Endothelial cell of umbilical vein (primary cell): ENCODE measurements at regions of chr13 and their contacts with region 1.

Region 1: DNA sequence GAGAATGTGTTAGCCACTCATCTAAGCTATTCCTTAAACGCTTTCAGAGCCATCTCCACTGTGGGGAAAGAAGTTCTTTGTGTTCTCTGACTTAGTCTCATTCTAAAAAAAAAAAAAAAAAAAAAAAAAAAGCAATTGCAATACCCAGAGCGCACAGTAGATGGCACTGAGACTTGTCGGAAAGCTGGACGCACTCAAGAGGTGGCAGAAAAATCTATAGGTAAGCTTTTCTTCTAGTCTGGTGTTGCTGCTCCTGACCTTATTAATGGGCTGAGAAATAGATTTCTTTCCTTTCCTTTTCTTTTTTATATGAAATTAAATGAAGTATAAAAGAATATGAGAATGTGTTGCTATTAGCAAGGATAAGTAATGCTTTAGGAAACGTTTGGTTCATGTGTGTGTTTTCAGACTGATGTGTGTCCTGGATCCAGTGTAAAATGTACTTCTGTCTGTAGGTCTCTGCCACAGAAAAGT is 4.7 kb upstream of the GJB2 start:
- DNase-seq: peak; percentile 54
- H3K4me3 ChIP-seq: no peak overlapping the region
- H3K27ac ChIP-seq: no peak overlapping the region
- H3K4me1 ChIP-seq: no peaks in the 10 kb centered on the region
- H3K27me3 ChIP-seq: peaks cover 45 to 68% of the 10 kb centered on the region in 2 experiments
- CTCF ChIP-seq: peak; percentile 64 to 75
- POLR2A ChIP-seq: no peak

Region 2: DNA sequence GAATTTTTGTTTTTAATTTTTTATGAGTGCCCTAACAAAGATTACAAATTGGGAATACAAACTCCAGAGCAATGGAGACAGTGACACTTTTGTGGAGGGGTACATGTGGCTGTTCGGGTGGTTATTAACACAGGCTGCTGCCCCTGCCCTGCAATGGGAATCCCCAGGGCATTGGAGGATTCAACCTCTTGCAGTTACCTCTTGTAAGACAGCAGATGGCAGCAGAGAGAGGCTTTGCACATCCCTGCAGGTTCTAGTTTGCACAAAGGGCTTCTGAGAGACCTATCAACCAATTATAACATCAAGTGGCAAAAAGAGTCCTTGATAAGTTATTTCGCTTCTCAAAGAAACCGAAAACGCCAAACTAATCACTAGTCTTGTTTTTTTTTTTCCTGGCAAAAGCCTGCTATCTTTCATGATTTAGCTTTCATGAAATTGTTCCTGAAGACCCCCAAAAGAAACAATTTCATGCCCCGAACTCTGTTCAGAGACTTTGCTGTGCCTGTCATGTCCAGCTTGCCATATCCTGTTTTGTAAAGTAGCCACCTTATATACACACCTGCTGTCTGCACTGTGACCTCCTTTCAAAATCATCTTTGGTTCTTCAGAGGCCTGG is 15.1 kb before region 1 on chr13:
- CTCF ChIA-PET with region 1: interaction called, 17 read pairs
- POLR2A ChIA-PET with region 1: no interaction called
- dilution Hi-C with region 1: no loop called
- intact Hi-C with region 1: no loop called
- DNase-seq: peak; percentile 68
- H3K4me3 ChIP-seq: no peak overlapping the region
- H3K27ac ChIP-seq: no peak overlapping the region
- H3K4me1 ChIP-seq: no peaks in the 10 kb centered on the region
- H3K27me3 ChIP-seq: peaks cover 28 to 45% of the 10 kb centered on the region in 2 experiments
- CTCF ChIP-seq: peak; percentile 74 to 78
- POLR2A ChIP-seq: no peak

Region 3: GRCh38 chr13:20209948-20210347 is 12.6 kb after region 1 on chr13:
- CTCF ChIA-PET with region 1: interaction called, 10 read pairs
- POLR2A ChIA-PET with region 1: no interaction called
- dilution Hi-C with region 1: no loop called
- intact Hi-C with region 1: no loop called
- DNase-seq: no peak
- H3K4me3 ChIP-seq: no peak overlapping the region
- H3K27ac ChIP-seq: no peak overlapping the region
- H3K4me1 ChIP-seq: no peaks in the 10 kb centered on the region
- H3K27me3 ChIP-seq: peaks cover 0 to 8% of the 10 kb centered on the region in 2 experiments
- CTCF ChIP-seq: no peak
- POLR2A ChIP-seq: no peak

Region 4: DNA sequence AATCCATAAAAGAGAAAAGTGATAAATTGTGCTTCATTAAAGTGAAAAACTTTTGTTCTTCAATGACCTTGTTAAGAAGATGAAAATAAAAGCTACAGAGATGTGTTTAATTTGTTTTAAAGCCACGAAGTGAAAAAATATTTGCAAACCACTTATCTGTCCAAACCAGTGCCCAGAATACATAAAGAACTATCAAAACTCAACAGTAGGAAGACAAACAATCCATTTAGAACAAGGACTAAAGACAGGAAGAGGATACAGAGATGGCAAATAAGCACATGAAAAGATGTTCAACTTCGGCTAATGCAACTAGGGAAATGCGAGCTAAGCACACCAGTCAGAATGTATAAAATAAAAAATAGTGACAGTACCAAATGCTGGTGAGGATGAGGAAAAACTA is 19.8 kb after region 1 on chr13:
- CTCF ChIA-PET with region 1: no interaction called
- POLR2A ChIA-PET with region 1: no interaction called
- dilution Hi-C with region 1: no loop called
- intact Hi-C with region 1: loop called (anchors 2 kb)
- DNase-seq: no peak
- H3K4me3 ChIP-seq: no peak overlapping the region
- H3K27ac ChIP-seq: no peak overlapping the region
- H3K4me1 ChIP-seq: no peaks in the 10 kb centered on the region
- H3K27me3 ChIP-seq: peaks cover 6 to 16% of the 10 kb centered on the region in 2 experiments
- CTCF ChIP-seq: no peak
- POLR2A ChIP-seq: no peak

Region 5: GRCh38 chr13:20227730-20228129 is 30.3 kb after region 1 on chr13:
- CTCF ChIA-PET with region 1: interaction called, 15 read pairs
- POLR2A ChIA-PET with region 1: no interaction called
- dilution Hi-C with region 1: no loop called
- intact Hi-C with region 1: no loop called
- DNase-seq: no peak
- H3K4me3 ChIP-seq: no peak overlapping the region
- H3K27ac ChIP-seq: no peak overlapping the region
- H3K4me1 ChIP-seq: no peaks in the 10 kb centered on the region
- H3K27me3 ChIP-seq: peaks cover 23 to 30% of the 10 kb centered on the region in 2 experiments
- CTCF ChIP-seq: no peak
- POLR2A ChIP-seq: no peak

Region 6: DNA sequence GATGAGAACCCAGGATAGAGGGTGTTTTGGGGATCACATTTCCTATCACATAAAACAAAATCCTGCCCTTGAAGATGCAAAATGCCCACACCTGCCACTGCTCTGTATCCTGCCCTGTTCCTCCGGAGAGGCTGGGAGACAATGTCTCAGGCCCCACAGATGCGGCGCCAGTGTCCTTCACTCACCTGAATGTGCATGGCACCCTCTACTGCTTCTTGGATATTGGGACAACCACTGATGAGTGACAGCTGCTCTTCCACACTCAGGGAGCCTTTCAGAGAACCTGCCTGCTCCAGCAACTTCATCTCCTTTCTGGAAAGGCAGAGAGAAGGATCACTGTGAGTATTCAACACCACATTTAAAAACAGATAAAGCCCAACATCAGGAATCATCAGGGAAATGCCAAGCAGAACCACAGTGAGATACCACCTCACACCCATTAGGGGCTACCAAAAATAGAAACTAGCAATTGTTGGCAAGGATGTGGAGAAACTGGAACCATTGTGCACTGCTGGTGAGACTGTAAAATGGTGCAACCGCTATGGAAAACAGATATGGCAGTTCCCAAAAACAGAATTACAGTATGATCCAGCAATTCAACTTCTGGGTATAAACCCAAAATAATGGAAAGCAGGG is 291.9 kb after region 1 on chr13:
- CTCF ChIA-PET with region 1: interaction called, 28 read pairs
- POLR2A ChIA-PET with region 1: no interaction called
- dilution Hi-C with region 1: no loop called
- intact Hi-C with region 1: loop called (anchors 1 kb)
- DNase-seq: no peak
- H3K4me3 ChIP-seq: no peak overlapping the region
- H3K27ac ChIP-seq: no peak overlapping the region
- H3K4me1 ChIP-seq: no peaks in the 10 kb centered on the region
- H3K27me3 ChIP-seq: no peaks in the 10 kb centered on the region
- CTCF ChIP-seq: no peak
- POLR2A ChIP-seq: no peak

Region 7: GRCh38 chr13:20686863-20687579 is 489.6 kb after region 1 on chr13:
- CTCF ChIA-PET with region 1: no interaction called
- POLR2A ChIA-PET with region 1: no interaction called
- dilution Hi-C with region 1: no loop called
- intact Hi-C with region 1: no loop called
- DNase-seq: no peak
- H3K4me3 ChIP-seq: no peak overlapping the region
- H3K27ac ChIP-seq: no peak overlapping the region
- H3K4me1 ChIP-seq: no peaks in the 10 kb centered on the region
- H3K27me3 ChIP-seq: no peaks in the 10 kb centered on the region
- CTCF ChIP-seq: no peak
- POLR2A ChIP-seq: no peak

Region 8: GRCh38 chr13:21124852-21125251 is 927.5 kb after region 1 on chr13:
- CTCF ChIA-PET with region 1: no interaction called
- POLR2A ChIA-PET with region 1: no interaction called
- dilution Hi-C with region 1: no loop called
- intact Hi-C with region 1: no loop called
- DNase-seq: peak; percentile 67
- H3K4me3 ChIP-seq: no peak overlapping the region
- H3K27ac ChIP-seq: no peak overlapping the region
- H3K4me1 ChIP-seq: no peaks in the 10 kb centered on the region
- H3K27me3 ChIP-seq: no peaks in the 10 kb centered on the region
- CTCF ChIP-seq: no peak
- POLR2A ChIP-seq: no peak